GM12878 (cell line): ENCODE measurements at regions of chr22 and their contacts with region 1.

Region 1: DNA sequence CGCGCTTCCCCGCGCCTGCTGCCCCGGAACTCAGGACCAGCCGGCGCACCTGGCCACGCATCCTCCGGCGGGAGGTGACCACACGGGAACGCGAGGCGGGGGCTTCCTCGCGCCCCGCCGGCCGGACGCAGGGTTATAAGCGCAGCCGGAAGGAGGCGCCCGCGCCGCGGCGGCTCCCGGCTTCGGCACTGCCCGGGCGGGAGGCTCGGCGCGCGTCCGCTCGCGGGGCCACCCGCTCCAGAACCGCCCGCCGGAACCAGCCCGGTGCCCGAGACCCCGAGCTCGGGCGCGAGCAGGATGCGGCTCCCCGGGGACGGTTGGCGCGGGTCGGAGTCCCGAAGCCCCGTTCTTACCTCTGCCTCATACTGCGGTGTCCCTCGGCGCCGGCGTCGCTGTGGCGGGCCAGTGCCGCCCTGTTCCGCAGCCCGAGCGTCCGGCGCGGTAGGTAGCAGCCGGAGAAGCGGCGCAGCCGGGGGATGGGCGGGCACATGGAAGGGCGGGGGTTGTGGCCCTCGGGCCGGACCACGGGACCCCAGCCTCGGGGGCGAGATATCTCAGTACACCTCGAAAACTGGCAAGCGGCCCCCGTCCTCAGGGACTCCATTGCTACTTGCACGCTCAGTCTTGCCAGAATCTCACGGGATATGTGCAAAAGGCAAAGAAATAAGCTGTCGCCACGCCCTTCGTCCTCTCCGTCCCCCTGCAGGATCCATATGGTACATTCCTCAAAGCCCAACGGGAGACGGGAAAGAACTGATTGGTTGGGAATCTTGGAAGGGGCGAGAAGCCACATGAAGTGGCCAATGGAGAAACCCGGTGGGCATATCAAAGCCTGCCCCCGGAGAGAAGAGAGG is 23.1 kb downstream of the MICAL3 start:
- DNase-seq: peak; percentile 75
- ATAC-seq: peak; percentile 86
- H3K4me3 ChIP-seq: peak overlapping the region; percentile 78
- H3K27ac ChIP-seq: peak overlapping the region; percentile 87
- H3K4me1 ChIP-seq: peaks cover 32% of the 10 kb centered on the region
- H3K27me3 ChIP-seq: no peaks in the 10 kb centered on the region
- CTCF ChIP-seq: peak; percentile 40 to 58 (median 47); a peak in 5 of 6 replicates
- EP300 ChIP-seq: no peak
- POLR2A ChIP-seq: peak; percentile 94
- RAD21 ChIP-seq: peak; percentile 52

Region 2: GRCh38 chr22:17773606-17774205 is 227.6 kb before region 1 on chr22:
- CTCF ChIA-PET with region 1: no interaction called
- POLR2A ChIA-PET with region 1: no interaction called
- RAD21 ChIA-PET with region 1: interaction called, 3 read pairs
- SMC1A ChIA-PET with region 1: no interaction called
- in situ Hi-C with region 1: no loop called
- intact Hi-C with region 1: loop called (anchors 10 kb)
- DNase-seq: no peak
- ATAC-seq: peak; percentile 49
- H3K4me3 ChIP-seq: peak overlapping the region; percentile 83
- H3K27ac ChIP-seq: peak overlapping the region; percentile 69
- H3K4me1 ChIP-seq: peaks cover 46% of the 10 kb centered on the region
- H3K27me3 ChIP-seq: no peaks in the 10 kb centered on the region
- CTCF ChIP-seq: no peak
- EP300 ChIP-seq: no peak
- POLR2A ChIP-seq: no peak; the same call in none of the 2 replicates
- RAD21 ChIP-seq: no peak

Region 3: DNA sequence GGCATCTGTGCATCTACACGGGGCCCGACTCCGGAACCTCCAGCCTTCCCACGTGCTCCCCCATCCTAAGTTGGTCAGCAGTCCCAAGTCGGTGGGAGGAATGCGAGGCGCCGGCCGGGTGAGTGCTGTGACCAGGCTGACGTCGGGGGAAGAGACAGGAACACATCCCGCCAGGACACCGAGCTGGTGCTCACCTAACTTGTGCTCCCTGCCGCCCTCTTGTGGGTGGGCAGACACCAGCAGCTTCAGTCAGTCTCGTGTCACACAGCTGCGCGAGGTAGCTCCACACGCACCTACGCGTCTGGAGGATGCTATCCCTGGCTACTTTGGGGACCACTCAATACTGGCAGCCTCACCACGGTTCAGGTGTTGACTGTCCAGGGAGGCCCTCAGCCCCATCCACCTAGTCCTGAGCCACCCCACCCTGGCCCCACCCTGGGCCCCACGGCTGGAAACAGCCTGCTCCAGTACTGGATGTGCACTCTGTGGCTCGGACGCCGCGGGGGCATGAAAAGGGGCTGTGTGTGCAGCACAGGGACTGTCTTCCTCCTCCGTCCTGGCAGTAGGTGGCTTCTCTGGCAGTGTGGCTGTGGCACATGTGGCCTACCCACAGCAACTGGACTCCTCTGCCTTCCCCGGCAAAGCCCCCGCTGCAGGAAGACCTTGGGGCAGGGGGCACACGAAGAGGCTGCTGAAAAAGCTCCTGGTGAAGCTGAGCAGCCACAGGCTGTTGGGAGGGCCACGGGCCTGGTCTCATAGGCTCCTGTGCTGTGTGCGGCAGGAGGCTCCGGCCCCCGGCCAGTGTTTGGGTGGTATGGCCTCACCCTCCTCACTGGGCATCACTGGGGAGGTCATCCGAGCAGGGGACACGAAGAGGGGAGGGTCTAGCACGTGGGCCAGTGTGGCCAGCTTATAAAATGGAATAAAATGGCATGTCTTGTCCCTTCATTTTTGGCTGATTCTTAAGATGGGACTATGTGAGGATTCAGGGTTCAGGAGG is 215.8 kb before region 1 on chr22:
- CTCF ChIA-PET with region 1: no interaction called
- POLR2A ChIA-PET with region 1: no interaction called
- RAD21 ChIA-PET with region 1: no interaction called
- SMC1A ChIA-PET with region 1: no interaction called
- in situ Hi-C with region 1: no loop called
- intact Hi-C with region 1: no loop called
- DNase-seq: no peak
- ATAC-seq: peak; percentile 67
- H3K4me3 ChIP-seq: no peak overlapping the region
- H3K27ac ChIP-seq: no peak overlapping the region
- H3K4me1 ChIP-seq: peaks cover 26% of the 10 kb centered on the region
- H3K27me3 ChIP-seq: no peaks in the 10 kb centered on the region
- CTCF ChIP-seq: peak; percentile 74 to 84 (median 79); a peak in 5 of 6 replicates
- EP300 ChIP-seq: no peak
- POLR2A ChIP-seq: peak; percentile 59; the same call in 1 of the 2 replicates
- RAD21 ChIP-seq: peak; percentile 51

Region 4: GRCh38 chr22:17964643-17965042 is 36.6 kb before region 1 on chr22:
- CTCF ChIA-PET with region 1: interaction called, 9 read pairs
- POLR2A ChIA-PET with region 1: interaction called, 9 read pairs
- RAD21 ChIA-PET with region 1: interaction called, 10 read pairs
- SMC1A ChIA-PET with region 1: interaction called, 5 read pairs
- in situ Hi-C with region 1: no loop called
- intact Hi-C with region 1: no loop called
- DNase-seq: peak; percentile 65
- ATAC-seq: peak; percentile 95
- H3K4me3 ChIP-seq: peak overlapping the region; percentile 41; the same call in 1 of the 2 replicates
- H3K27ac ChIP-seq: peak overlapping the region; percentile 67
- H3K4me1 ChIP-seq: peaks cover 28% of the 10 kb centered on the region
- H3K27me3 ChIP-seq: no peaks in the 10 kb centered on the region
- CTCF ChIP-seq: peak in 1 of 3 experiments; percentile 8; a peak in 1 of 6 replicates
- EP300 ChIP-seq: peak in 1 of 2 experiments; percentile 34; a peak in 1 of 4 replicates
- POLR2A ChIP-seq: peak; percentile 50; the same call in 1 of the 2 replicates
- RAD21 ChIP-seq: peak; percentile 34

Region 5: GRCh38 chr22:17972385-17973181 is 28.7 kb before region 1 on chr22:
- CTCF ChIA-PET with region 1: interaction called, 7 read pairs
- POLR2A ChIA-PET with region 1: interaction called, 12 read pairs
- RAD21 ChIA-PET with region 1: interaction called, 8 read pairs
- SMC1A ChIA-PET with region 1: interaction called, 34 read pairs
- in situ Hi-C with region 1: no loop called
- intact Hi-C with region 1: loop called (anchors 2 kb)
- DNase-seq: no peak
- ATAC-seq: no peak
- H3K4me3 ChIP-seq: no peak overlapping the region
- H3K27ac ChIP-seq: no peak overlapping the region
- H3K4me1 ChIP-seq: peaks cover 28% of the 10 kb centered on the region
- H3K27me3 ChIP-seq: no peaks in the 10 kb centered on the region; a peak in 1 of 4 replicates
- CTCF ChIP-seq: no peak
- EP300 ChIP-seq: no peak
- POLR2A ChIP-seq: no peak
- RAD21 ChIP-seq: no peak

Region 6: GRCh38 chr22:18012531-18012930 is 11.3 kb after region 1 on chr22:
- CTCF ChIA-PET with region 1: interaction called, 6 read pairs
- POLR2A ChIA-PET with region 1: interaction called, 7 read pairs
- RAD21 ChIA-PET with region 1: interaction called, 10 read pairs
- SMC1A ChIA-PET with region 1: interaction called, 6 read pairs
- in situ Hi-C with region 1: no loop called
- intact Hi-C with region 1: no loop called
- DNase-seq: no peak
- ATAC-seq: no peak
- H3K4me3 ChIP-seq: no peak overlapping the region
- H3K27ac ChIP-seq: no peak overlapping the region
- H3K4me1 ChIP-seq: peaks cover 11% of the 10 kb centered on the region
- H3K27me3 ChIP-seq: no peaks in the 10 kb centered on the region
- CTCF ChIP-seq: no peak
- EP300 ChIP-seq: no peak
- POLR2A ChIP-seq: no peak
- RAD21 ChIP-seq: no peak

Region 7: GRCh38 chr22:18057568-18058209 is 56.4 kb after region 1 on chr22:
- CTCF ChIA-PET with region 1: interaction called, 7 read pairs
- POLR2A ChIA-PET with region 1: interaction called, 6 read pairs
- RAD21 ChIA-PET with region 1: interaction called, 26 read pairs
- SMC1A ChIA-PET with region 1: interaction called, 14 read pairs
- in situ Hi-C with region 1: no loop called
- intact Hi-C with region 1: loop called (anchors 1 kb)
- DNase-seq: peak; percentile 68
- ATAC-seq: peak; percentile 84
- H3K4me3 ChIP-seq: peak overlapping the region; percentile 48; the same call in 1 of the 2 replicates
- H3K27ac ChIP-seq: peak overlapping the region; percentile 49; the same call in 1 of the 2 replicates
- H3K4me1 ChIP-seq: peaks cover 30% of the 10 kb centered on the region
- H3K27me3 ChIP-seq: no peaks in the 10 kb centered on the region
- CTCF ChIP-seq: no peak
- EP300 ChIP-seq: peak; percentile 29 to 49; a peak in 2 of 4 replicates
- POLR2A ChIP-seq: no peak
- RAD21 ChIP-seq: no peak